ENCODE measurements at regions of chr7 and their contacts with region 1.

Region 1: DNA sequence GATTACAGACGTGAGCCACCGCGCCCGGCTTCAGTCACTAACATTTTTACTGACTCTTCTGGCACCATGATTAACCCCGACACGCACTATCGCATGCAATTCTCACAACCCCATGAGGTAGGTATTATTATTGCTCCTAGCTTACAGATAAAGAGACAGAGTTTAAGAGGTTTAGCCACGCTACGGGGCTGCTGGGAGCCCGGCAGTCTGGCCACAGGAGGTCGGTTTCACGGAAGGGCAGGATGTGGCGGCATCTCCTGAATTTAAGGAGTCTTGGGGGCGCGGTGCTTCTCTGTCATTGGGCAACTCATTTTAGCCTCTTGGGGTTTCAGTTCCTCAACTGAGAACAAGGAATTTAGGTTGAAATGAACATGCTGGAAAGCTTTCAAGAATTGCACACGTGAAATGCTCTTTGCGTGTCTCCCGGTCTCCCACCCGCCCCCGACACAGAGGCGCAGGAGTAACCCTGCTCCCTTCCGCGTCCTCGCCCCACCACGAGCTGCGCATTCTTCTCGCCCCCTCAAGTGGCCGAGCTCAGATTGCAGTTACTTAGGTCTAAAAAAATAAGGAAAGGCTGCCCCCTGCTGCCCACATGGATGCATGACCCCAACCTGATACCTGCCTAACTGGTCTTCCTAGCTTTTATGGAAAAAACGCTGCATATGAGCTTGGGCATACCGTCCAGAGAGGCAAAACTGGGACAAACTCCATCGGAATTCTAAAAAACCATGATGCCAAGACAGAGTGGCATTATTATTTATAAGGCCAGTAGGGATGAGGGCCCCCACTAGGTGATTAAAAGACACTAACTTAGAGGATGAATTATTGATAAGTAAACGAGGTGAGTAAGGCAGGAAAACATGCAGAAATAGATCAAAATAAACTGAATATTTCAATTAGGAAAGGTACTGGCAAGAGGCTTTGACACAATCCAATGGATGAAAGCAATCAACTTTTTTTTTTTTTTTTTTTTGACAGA is 12.4 kb downstream of the PRSS2 start:
- DNase-seq: peak; percentile 66
- ATAC-seq: peak; percentile 91
- H3K4me3 ChIP-seq: peak overlapping the region; percentile 65
- H3K27ac ChIP-seq: peak overlapping the region; percentile 45; the same call in 1 of the 2 replicates
- H3K4me1 ChIP-seq: peaks cover 9% of the 10 kb centered on the region
- H3K27me3 ChIP-seq: no peaks in the 10 kb centered on the region
- CTCF ChIP-seq: peak; percentile 91 to 100 (median 97); a peak in 5 of 6 replicates
- EP300 ChIP-seq: peak in 1 of 2 experiments; percentile 32; a peak in 1 of 4 replicates
- POLR2A ChIP-seq: no peak
- RAD21 ChIP-seq: peak; percentile 100

Region 2: GRCh38 chr7:142535123-142535779 is 248.0 kb before region 1 on chr7:
- CTCF ChIA-PET with region 1: no interaction called
- POLR2A ChIA-PET with region 1: no interaction called
- RAD21 ChIA-PET with region 1: interaction called, 11 read pairs
- SMC1A ChIA-PET with region 1: no interaction called
- in situ Hi-C with region 1: no loop called
- intact Hi-C with region 1: loop called (anchors 10 kb)
- DNase-seq: peak; percentile 20
- ATAC-seq: peak; percentile 99
- H3K4me3 ChIP-seq: no peak overlapping the region
- H3K27ac ChIP-seq: no peak overlapping the region
- H3K4me1 ChIP-seq: no peaks in the 10 kb centered on the region
- H3K27me3 ChIP-seq: no peaks in the 10 kb centered on the region
- CTCF ChIP-seq: peak; percentile 74 to 84 (median 84)
- EP300 ChIP-seq: no peak
- POLR2A ChIP-seq: no peak
- RAD21 ChIP-seq: peak; percentile 73

Region 3: GRCh38 chr7:142632291-142633134 is 150.7 kb before region 1 on chr7:
- CTCF ChIA-PET with region 1: interaction called, 217 read pairs
- POLR2A ChIA-PET with region 1: interaction called, 3 read pairs
- RAD21 ChIA-PET with region 1: interaction called, 102 read pairs
- SMC1A ChIA-PET with region 1: interaction called, 102 read pairs
- in situ Hi-C with region 1: loop called (anchors 5 kb)
- intact Hi-C with region 1: loop called (anchors 1 kb)
- DNase-seq: peak; percentile 32
- ATAC-seq: peak; percentile 100
- H3K4me3 ChIP-seq: no peak overlapping the region
- H3K27ac ChIP-seq: no peak overlapping the region
- H3K4me1 ChIP-seq: no peaks in the 10 kb centered on the region
- H3K27me3 ChIP-seq: peaks cover 0 to 1% of the 10 kb centered on the region in 2 experiments; a peak in 1 of 4 replicates
- CTCF ChIP-seq: peak; percentile 73 to 86 (median 82)
- EP300 ChIP-seq: no peak
- POLR2A ChIP-seq: no peak
- RAD21 ChIP-seq: peak; percentile 81

Region 4: DNA sequence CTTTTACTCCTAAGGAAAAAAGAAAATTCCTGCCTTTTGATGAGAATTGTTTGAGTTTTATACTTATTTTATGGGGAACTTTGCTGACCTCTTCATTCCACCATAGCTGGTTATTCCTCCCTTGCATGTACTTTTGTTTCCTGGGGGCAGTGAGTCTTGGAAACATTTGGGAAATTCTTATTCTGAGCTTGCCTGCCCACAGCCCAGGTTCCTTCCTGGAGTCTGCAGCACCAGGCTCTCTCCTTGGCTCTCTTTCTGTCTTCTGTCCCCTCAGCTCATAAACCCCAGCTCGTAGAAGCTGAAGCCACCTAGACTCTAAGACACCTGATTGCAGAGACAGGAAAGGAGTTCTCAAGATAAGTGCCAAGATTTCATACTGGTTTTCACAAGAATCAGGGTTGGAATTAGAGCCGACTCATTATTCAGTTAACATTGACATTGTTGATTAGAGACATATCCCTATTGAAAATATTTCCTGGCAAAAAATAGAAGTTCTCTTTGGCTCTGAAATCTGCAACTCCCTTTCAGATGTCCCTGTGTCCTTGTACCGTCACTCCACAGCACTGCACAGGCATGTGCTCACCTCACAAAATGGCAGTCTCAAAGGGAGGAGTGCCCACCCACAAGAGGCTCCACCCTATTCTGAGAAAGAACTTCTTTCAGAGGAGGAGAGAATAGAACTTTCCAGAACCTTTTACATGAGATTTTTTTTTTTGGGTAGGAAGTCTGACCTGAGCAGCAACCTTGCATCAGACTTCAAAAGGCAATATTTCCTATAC is 101.7 kb before region 1 on chr7:
- CTCF ChIA-PET with region 1: interaction called, 53 read pairs
- POLR2A ChIA-PET with region 1: no interaction called
- RAD21 ChIA-PET with region 1: interaction called, 3 read pairs
- SMC1A ChIA-PET with region 1: interaction called, 5 read pairs
- in situ Hi-C with region 1: no loop called
- intact Hi-C with region 1: no loop called
- DNase-seq: no peak
- ATAC-seq: no peak
- H3K4me3 ChIP-seq: no peak overlapping the region
- H3K27ac ChIP-seq: no peak overlapping the region
- H3K4me1 ChIP-seq: no peaks in the 10 kb centered on the region
- H3K27me3 ChIP-seq: no peaks in the 10 kb centered on the region
- CTCF ChIP-seq: no peak
- EP300 ChIP-seq: no peak
- POLR2A ChIP-seq: no peak
- RAD21 ChIP-seq: no peak

Region 5: DNA sequence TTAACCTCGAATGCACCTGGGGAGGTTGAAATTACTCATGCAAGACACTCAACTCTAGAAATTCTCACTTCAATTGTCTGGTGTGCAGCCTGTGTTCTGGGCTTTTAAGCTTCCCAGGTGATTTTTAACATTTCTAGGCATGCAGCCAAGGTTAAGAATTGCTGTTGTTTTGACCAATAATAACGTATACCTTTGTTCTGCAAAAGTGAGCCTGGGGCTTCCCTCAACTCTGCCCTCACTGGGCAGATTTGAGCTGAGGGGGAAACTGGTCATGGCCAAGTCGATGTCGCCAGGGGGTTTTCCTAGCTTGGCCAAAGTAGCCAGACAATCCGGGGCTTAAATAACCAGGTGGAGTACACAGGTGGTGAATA is 11.9 kb before region 1 on chr7:
- CTCF ChIA-PET with region 1: interaction called, 53 read pairs
- POLR2A ChIA-PET with region 1: interaction called, 8 read pairs
- RAD21 ChIA-PET with region 1: interaction called, 51 read pairs
- SMC1A ChIA-PET with region 1: interaction called, 35 read pairs
- in situ Hi-C with region 1: no loop called
- intact Hi-C with region 1: no loop called
- DNase-seq: peak; percentile 73
- ATAC-seq: peak; percentile 89
- H3K4me3 ChIP-seq: no peak overlapping the region
- H3K27ac ChIP-seq: no peak overlapping the region
- H3K4me1 ChIP-seq: peaks cover 19% of the 10 kb centered on the region
- H3K27me3 ChIP-seq: no peaks in the 10 kb centered on the region
- CTCF ChIP-seq: no peak
- EP300 ChIP-seq: peak; percentile 43 to 51; a peak in 2 of 4 replicates
- POLR2A ChIP-seq: no peak
- RAD21 ChIP-seq: no peak

Region 6: GRCh38 chr7:142833174-142834048 is 50.2 kb after region 1 on chr7:
- CTCF ChIA-PET with region 1: interaction called, 21 read pairs
- POLR2A ChIA-PET with region 1: no interaction called
- RAD21 ChIA-PET with region 1: interaction called, 15 read pairs
- SMC1A ChIA-PET with region 1: interaction called, 6 read pairs
- in situ Hi-C with region 1: no loop called
- intact Hi-C with region 1: no loop called
- DNase-seq: no peak
- ATAC-seq: peak; percentile 89
- H3K4me3 ChIP-seq: no peak overlapping the region
- H3K27ac ChIP-seq: no peak overlapping the region
- H3K4me1 ChIP-seq: peaks cover 19% of the 10 kb centered on the region
- H3K27me3 ChIP-seq: no peaks in the 10 kb centered on the region
- CTCF ChIP-seq: no peak
- EP300 ChIP-seq: peak; percentile 49 to 60; a peak in 3 of 4 replicates
- POLR2A ChIP-seq: no peak
- RAD21 ChIP-seq: no peak

Region 7: DNA sequence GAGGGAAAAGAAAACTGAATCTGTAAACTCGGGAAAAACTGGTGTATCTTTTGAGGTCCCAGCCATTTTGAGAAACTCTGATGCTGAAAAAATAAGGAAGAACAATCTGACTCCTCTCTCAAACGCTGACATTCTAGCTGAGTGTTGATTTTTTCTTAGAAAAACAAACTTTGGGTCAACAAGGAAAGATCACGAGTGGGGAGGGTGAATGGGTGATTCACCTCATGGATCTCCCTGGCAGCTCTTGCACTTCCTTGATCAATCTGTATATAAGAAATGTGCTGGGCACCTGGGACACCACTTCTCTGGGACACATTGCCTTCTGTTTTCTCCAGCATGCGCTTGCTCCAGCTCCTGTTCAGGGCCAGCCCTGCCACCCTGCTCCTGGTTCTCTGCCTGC is 348.6 kb after region 1 on chr7 and contains the start of gene PIP:
- CTCF ChIA-PET with region 1: no interaction called
- POLR2A ChIA-PET with region 1: no interaction called
- RAD21 ChIA-PET with region 1: no interaction called
- SMC1A ChIA-PET with region 1: no interaction called
- in situ Hi-C with region 1: no loop called
- intact Hi-C with region 1: no loop called
- DNase-seq: no peak
- ATAC-seq: no peak
- H3K4me3 ChIP-seq: no peak within 1 kb of the TSS
- H3K27ac ChIP-seq: no peak within 1 kb of the TSS
- H3K4me1 ChIP-seq: no peaks in the 10 kb centered on the region
- H3K27me3 ChIP-seq: no peaks in the 10 kb centered on the region
- CTCF ChIP-seq: no peak
- EP300 ChIP-seq: no peak
- POLR2A ChIP-seq: no peak
- RAD21 ChIP-seq: no peak
- polyA plus RNA-seq, gene PIP: not detected